ENCODE measurements at regions of chr14 and their contacts with region 1.

Region 1: DNA sequence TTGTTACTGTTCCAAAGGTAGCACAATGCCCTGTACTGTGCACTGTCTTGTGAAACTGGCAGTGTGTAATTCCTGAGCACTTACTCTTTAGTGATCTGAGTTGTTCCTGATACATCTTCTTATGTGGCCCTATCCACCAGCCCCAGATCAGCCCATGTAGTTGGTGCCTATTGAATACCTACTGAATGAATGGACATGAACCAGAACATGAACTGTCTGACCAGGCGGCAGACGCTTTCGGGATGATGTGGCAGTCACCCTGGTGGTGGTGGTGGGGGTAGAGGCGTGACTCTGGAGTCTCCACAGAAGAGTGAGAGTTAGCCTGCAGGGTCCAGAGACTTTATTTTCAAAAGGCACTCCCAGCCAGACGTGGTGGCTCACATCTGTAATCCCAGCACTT is 46.6 kb upstream of the PAPOLA start:
- DNase-seq: no peak
- H3K4me3 ChIP-seq: no peak overlapping the region
- H3K4me3 Mint-ChIP-seq: no peak overlapping the region
- H3K27ac Mint-ChIP-seq: no peak overlapping the region
- H3K4me1 ChIP-seq: peaks cover 31% of the 10 kb centered on the region
- H3K4me1 Mint-ChIP-seq: peaks cover 7% of the 10 kb centered on the region
- H3K27me3 ChIP-seq: no peaks in the 10 kb centered on the region
- H3K27me3 Mint-ChIP-seq: no peaks in the 10 kb centered on the region
- CTCF ChIP-seq: no peak

Region 2: GRCh38 chr14:96776791-96777190 is 321.2 kb after region 1 on chr14:
- CTCF ChIA-PET with region 1: no interaction called
- POLR2A ChIA-PET with region 1: interaction called, 14 read pairs
- intact Hi-C with region 1: no loop called
- DNase-seq: no peak
- H3K4me3 ChIP-seq: no peak overlapping the region
- H3K4me3 Mint-ChIP-seq: no peak overlapping the region
- H3K27ac Mint-ChIP-seq: no peak overlapping the region
- H3K4me1 ChIP-seq: no peaks in the 10 kb centered on the region
- H3K4me1 Mint-ChIP-seq: no peaks in the 10 kb centered on the region
- H3K27me3 ChIP-seq: no peaks in the 10 kb centered on the region
- H3K27me3 Mint-ChIP-seq: peaks cover 11% of the 10 kb centered on the region
- CTCF ChIP-seq: no peak